Psoas muscle (tissue), 8 donors: ENCODE measurements at regions of chr2 and their contacts with region 1.

Region 1: DNA sequence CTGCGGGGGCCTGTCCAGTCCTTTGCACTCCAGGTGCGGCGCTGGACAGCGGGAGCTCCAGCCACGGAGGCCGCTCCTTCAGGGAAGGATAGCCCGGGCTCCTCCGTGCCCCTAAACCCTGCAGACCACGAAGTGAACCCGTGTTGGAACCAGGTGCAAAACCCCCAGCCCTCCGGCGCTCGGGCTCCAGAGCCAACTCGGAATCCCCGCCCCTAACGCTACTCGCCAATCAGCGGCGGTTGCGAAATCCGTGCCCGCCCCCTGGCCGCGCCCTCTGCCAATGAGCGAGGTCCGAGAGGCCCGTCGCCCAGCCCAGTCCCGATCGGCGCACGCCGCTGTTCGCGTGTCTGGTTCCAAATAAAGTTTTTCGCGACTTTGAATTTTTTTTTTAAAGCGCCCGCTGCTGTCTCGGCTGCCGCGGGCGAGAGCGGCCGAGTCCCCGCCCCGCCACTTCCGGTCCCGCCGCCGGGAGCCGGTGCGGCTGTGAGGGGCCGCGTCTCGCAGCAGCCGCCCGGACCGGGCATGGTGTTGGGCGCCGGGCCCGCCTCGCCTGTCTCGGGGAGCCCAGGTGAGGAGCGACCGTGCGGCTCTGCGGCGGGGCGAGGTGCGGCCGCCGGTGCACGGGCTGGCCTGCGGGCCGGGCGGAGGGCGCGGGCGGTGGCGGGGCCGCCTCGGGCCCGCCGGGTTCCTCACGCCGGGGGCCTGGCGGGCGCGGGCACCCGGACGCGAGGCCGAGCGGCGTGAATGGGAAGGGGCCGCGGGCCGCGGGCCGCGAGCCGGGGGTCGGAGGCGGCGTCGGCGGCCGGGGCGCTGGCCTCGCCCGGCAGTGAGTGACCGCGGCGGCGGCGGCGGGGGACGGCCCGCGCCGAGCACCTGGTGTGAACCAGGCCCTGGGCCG is at the start of gene UBE2F:
- DNase-seq: peak; percentile 97 to 99
- ATAC-seq: peak; percentile 97 to 99 (median 98)
- H3K4me3 ChIP-seq: peak within 1 kb of the TSS; percentile 88
- H3K27ac ChIP-seq: peak within 1 kb of the TSS; percentile 78
- H3K4me1 ChIP-seq: peaks cover 25% of the 10 kb centered on the region
- H3K27me3 ChIP-seq: no peaks in the 10 kb centered on the region
- CTCF ChIP-seq: no peak
- total RNA-seq, gene UBE2F: 46.0 to 67.5 (median 52.5) TPM

Region 2: GRCh38 chr2:237904801-237905599 is 61.8 kb before region 1 on chr2:
- intact Hi-C with region 1: loop called in 1 of 2 experiments (anchors 5 kb)
- DNase-seq: peak; percentile 77 to 88
- ATAC-seq: peak; percentile 86 to 94 (median 93)
- H3K4me3 ChIP-seq: peak overlapping the region; percentile 24
- H3K27ac ChIP-seq: peak overlapping the region; percentile 93
- H3K4me1 ChIP-seq: peaks cover 23% of the 10 kb centered on the region
- H3K27me3 ChIP-seq: no peaks in the 10 kb centered on the region
- CTCF ChIP-seq: no peak

Region 3: GRCh38 chr2:237923481-237924163 is 43.2 kb before region 1 on chr2:
- intact Hi-C with region 1: loop called in 1 of 2 experiments (anchors 5 kb)
- DNase-seq: peak; percentile 79 to 89
- ATAC-seq: peak; percentile 82 to 96 (median 92)
- H3K4me3 ChIP-seq: peak overlapping the region; percentile 54
- H3K27ac ChIP-seq: peak overlapping the region; percentile 56
- H3K4me1 ChIP-seq: no peaks in the 10 kb centered on the region
- H3K27me3 ChIP-seq: no peaks in the 10 kb centered on the region
- CTCF ChIP-seq: peak; percentile 98

Region 4: GRCh38 chr2:238060542-238061314 is 93.9 kb after region 1 on chr2 and contains the start of gene SCLY:
- intact Hi-C with region 1: loop called in 1 of 2 experiments (anchors 2 kb)
- DNase-seq: peak; percentile 98 to 99
- ATAC-seq: peak; percentile 99
- H3K4me3 ChIP-seq: peak within 1 kb of the TSS; percentile 99
- H3K27ac ChIP-seq: peak within 1 kb of the TSS; percentile 95
- H3K4me1 ChIP-seq: peaks cover 13% of the 10 kb centered on the region
- H3K27me3 ChIP-seq: no peaks in the 10 kb centered on the region
- CTCF ChIP-seq: no peak
- total RNA-seq, gene SCLY: 4.8 to 10.1 (median 7.4) TPM

Region 5: DNA sequence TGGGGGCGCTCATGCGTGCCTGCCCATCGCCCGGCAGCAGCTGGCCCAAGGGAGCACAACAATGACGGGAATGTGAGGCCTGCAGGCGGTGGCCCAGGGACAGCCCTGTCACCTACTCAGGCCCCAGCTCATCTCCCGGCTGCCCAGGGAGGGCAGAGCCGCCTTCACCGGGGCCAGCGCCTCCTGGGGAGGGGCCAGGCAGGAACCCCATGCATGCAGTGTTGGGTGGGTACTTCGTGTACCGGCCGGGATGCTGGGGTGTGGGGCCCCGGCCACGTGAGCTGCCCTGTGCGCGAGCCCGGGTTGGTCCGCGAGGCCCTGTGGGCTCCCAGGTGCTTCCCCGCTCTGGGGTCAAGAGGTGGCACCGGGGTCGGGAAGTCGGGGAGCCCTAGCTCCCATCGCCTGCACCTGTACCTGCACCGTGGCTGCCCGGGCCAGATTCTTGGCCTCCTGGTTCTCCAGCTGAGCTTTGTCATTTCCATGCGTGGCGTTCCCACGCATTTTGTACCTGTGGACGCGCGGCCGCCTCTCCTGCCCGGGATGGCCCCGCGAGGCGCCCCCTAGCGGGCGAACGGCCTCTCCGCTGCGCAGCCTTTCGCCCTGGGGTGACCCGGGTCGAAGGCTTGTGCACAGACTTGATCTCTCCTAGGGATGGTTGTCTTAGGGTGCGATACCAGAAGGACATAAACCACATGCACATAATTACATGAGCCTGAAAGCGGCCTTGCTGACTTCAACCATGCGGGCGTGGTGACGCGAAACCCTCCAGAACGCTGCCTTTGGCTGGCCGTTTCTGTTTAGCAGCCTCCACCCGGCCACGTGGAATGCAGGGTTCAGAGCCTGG is 172.6 kb after region 1 on chr2:
- intact Hi-C with region 1: loop called (anchors 5 to 10 kb)
- DNase-seq: peak in 1 of 2 donors; percentile 80
- ATAC-seq: peak; percentile 22 to 39 (median 30)
- H3K4me3 ChIP-seq: peak overlapping the region; percentile 83
- H3K27ac ChIP-seq: peak overlapping the region; percentile 99
- H3K4me1 ChIP-seq: peaks cover 56% of the 10 kb centered on the region
- H3K27me3 ChIP-seq: no peaks in the 10 kb centered on the region
- CTCF ChIP-seq: peak; percentile 75

Region 6: GRCh38 chr2:238158527-238159070 is 191.8 kb after region 1 on chr2 and contains the start of gene ERFE:
- intact Hi-C with region 1: no loop called
- DNase-seq: peak; percentile 43 to 77
- ATAC-seq: peak; percentile 29 to 42 (median 31)
- H3K4me3 ChIP-seq: peak within 1 kb of the TSS; percentile 49
- H3K27ac ChIP-seq: peak within 1 kb of the TSS; percentile 16
- H3K4me1 ChIP-seq: peaks cover 28% of the 10 kb centered on the region
- H3K27me3 ChIP-seq: peaks cover 0 to 21% (median 5%) of the 10 kb centered on the region in 3 donors
- CTCF ChIP-seq: peak; percentile 49
- total RNA-seq, gene ERFE: 1.8 to 18.2 (median 4.5) TPM